ENCODE measurements at regions of chr5 and their contacts with region 1.

Region 1: DNA sequence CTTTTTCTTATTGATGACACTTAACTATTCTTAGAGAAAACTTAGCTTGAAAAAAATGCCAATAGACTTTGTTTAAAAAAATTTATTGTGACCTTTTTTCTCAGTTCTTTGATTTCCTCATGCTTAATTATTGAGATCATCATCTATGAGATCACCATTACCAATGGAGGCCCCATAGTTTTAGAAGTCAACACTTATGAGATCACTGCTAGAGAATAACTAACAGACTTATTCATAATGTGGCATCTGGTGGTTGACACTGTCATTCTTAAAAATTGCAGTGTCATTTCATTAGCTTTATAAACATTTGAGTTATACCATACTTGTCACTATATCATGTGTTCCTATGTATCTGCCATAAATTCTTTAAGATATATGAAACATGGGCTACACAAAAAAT is 14.9 kb upstream of the FEM1C start:
- DNase-seq: no peak
- ATAC-seq: no peak
- H3K4me3 ChIP-seq: no peak overlapping the region
- H3K4me3 Mint-ChIP-seq: no peak overlapping the region
- H3K27ac ChIP-seq: no peak overlapping the region
- H3K27ac Mint-ChIP-seq: no peak overlapping the region
- H3K4me1 ChIP-seq: no peaks in the 10 kb centered on the region
- H3K4me1 Mint-ChIP-seq: peaks cover 0 to 12% (median 0%) of the 10 kb centered on the region in 3 donors
- H3K27me3 ChIP-seq: no peaks in the 10 kb centered on the region
- H3K27me3 Mint-ChIP-seq: peaks cover 3 to 17% of the 10 kb centered on the region in 2 donors

Region 2: DNA sequence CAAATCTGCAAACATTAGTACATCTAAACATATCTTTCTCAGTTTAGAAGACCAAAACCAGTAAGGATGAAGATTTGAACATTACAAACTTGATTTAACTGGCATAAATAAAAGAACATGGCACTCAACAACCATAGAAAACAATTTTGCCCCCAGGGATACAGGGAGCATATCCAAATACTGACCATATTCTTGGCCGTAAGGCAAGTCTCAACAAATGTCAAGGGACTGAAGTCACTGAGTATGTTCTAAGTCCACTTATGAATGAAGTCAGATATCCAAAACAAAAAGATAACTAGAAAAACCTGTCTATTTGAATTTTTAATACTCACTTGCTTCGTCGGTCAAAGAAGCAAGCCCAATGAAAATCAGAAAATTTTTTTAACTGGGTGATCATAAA is 29.1 kb before region 1 on chr5:
- CTCF ChIA-PET with region 1: interaction called in 1 of 2 experiments, 3 read pairs
- POLR2A ChIA-PET with region 1: interaction called in 1 of 2 experiments, 10 read pairs
- DNase-seq: no peak
- ATAC-seq: no peak
- H3K4me3 ChIP-seq: no peak overlapping the region
- H3K4me3 Mint-ChIP-seq: no peak overlapping the region
- H3K27ac ChIP-seq: no peak overlapping the region
- H3K27ac Mint-ChIP-seq: no peak overlapping the region
- H3K4me1 ChIP-seq: peaks cover 0 to 7% of the 10 kb centered on the region in 2 experiments
- H3K4me1 Mint-ChIP-seq: peaks cover 63 to 79% (median 76%) of the 10 kb centered on the region in 3 donors
- H3K27me3 ChIP-seq: no peaks in the 10 kb centered on the region
- H3K27me3 Mint-ChIP-seq: no peaks in the 10 kb centered on the region